ENCODE measurements at regions of chr7 and their contacts with region 1.

Region 1: DNA sequence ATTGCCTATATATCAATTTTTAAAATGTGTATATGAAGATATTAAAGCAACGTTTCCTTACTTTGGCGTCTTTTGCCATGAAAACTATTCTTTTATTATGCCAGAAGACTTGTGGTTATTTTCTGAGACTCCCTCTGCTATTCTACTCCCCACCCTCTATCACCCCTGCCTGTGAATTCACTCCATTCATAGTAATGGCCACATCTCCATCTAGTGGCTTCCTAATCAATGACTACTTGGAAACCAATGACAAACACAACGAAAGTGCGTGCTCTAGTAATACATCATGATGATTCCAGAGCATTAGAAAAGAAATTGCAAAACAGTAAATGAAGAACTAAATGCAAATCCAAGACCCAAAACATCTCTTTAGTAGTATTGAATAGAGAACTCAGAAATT is 186.7 kb upstream of the HGF start:
- DNase-seq: no peak
- H3K4me3 ChIP-seq: no peak overlapping the region
- H3K27ac ChIP-seq: no peak overlapping the region
- H3K4me1 ChIP-seq: no peaks in the 10 kb centered on the region
- H3K27me3 ChIP-seq: no peaks in the 10 kb centered on the region
- CTCF ChIP-seq: peak in 2 of 3 experiments; percentile 68 to 71; a peak in 3 of 4 replicates
- EP300 ChIP-seq: no peak
- POLR2A ChIP-seq: no peak
- RAD21 ChIP-seq: peak; percentile 92 to 94

Region 2: DNA sequence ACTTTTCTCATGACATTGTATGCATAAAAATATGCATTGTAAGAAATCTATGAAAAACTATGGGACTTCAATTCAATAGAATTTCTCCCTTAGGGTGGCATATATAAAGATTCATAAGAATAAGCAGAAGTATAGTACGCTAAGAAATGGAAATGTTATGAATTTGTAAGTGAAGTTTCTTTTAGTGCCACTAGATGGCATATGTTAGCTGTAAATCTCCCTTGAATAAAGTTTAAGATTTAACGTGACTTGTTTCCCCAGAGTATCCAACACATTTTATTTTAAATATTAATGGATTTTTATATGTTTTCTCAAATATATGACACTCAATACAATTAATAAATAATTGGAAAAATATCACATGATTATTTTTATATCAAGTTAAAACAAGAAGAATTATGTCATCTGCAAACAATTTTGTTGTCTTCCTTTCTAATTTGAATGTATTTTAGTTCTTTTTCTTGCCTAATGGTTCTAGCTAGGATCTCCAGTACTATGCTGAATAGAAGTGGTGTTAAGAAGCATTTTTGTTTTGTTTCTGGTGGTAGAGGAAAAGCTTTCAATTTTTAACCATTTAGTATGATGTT is 473.8 kb before region 1 on chr7:
- CTCF ChIA-PET with region 1: interaction called, 13 read pairs
- POLR2A ChIA-PET with region 1: no interaction called
- DNase-seq: no peak
- H3K4me3 ChIP-seq: no peak overlapping the region
- H3K27ac ChIP-seq: no peak overlapping the region
- H3K4me1 ChIP-seq: 0 out of 7 replicates have a peak, but pooled peaks cover 0 to 4% (median 0%) of the 10 kb centered on the region in 4 experiments
- H3K27me3 ChIP-seq: no peaks in the 10 kb centered on the region
- CTCF ChIP-seq: peak in 1 of 3 experiments; percentile 26; a peak in 1 of 4 replicates
- EP300 ChIP-seq: no peak
- POLR2A ChIP-seq: no peak
- RAD21 ChIP-seq: peak in 1 of 2 experiments; percentile 63

Region 3: GRCh38 chr7:82036146-82036886 is 79.8 kb after region 1 on chr7:
- CTCF ChIA-PET with region 1: no interaction called
- POLR2A ChIA-PET with region 1: no interaction called
- DNase-seq: no peak
- H3K4me3 ChIP-seq: no peak overlapping the region
- H3K27ac ChIP-seq: no peak overlapping the region
- H3K4me1 ChIP-seq: no peaks in the 10 kb centered on the region
- H3K27me3 ChIP-seq: no peaks in the 10 kb centered on the region
- CTCF ChIP-seq: no peak
- EP300 ChIP-seq: no peak
- POLR2A ChIP-seq: no peak
- RAD21 ChIP-seq: no peak

Region 4: GRCh38 chr7:82194016-82194643 is 237.6 kb after region 1 on chr7:
- CTCF ChIA-PET with region 1: no interaction called
- POLR2A ChIA-PET with region 1: no interaction called
- DNase-seq: no peak
- H3K4me3 ChIP-seq: no peak overlapping the region
- H3K27ac ChIP-seq: no peak overlapping the region
- H3K4me1 ChIP-seq: no peaks in the 10 kb centered on the region
- H3K27me3 ChIP-seq: no peaks in the 10 kb centered on the region
- CTCF ChIP-seq: no peak
- EP300 ChIP-seq: no peak
- POLR2A ChIP-seq: no peak
- RAD21 ChIP-seq: no peak

Measured in H1 (cell line).